ENCODE measurements at regions of chr1 and their contacts with region 1.

Region 1: DNA sequence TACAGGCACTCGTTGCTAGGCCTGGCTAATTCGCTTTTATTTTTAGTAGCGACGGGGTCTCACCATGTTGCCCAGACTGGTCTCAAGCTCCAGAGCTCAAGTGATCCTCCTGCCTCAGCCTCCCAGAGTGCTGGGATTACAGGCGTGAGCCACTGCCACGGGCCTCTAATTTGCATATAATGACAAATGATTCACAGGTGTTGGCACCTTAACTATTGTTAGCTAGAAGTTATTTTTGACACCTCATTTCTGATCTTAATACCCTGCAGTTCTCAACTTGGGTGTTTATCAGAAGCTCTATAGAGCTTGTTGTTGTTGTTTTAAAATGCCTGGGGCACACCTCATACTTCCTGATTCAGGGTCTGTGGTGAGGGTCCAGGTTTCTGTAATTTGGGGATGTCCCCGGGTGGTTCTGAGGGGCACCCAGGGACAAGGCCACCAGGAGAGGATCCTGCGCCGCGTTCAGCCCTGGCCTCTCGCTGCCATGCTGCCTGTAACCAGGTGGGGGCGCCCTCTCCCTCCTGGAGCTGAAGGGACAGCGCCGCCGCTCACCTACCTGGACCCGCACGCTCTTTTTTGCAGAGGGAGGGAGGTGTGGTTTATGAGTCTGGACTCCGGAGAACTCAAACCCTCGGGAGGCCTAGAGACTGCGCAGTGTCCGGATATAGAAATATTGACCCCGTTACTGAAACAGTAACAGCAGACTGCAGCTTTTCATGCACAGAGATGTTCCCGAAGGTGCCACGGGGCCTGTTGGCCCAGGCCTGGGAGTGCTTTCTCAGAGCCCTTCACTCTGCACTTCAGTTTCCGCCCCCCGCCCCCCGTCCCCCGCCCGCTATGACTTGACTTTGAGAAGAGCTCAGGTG is 23.0 kb upstream of the NEK2 start:
- DNase-seq: peak; percentile 89
- H3K4me3 Mint-ChIP-seq: no peak overlapping the region
- H3K27ac Mint-ChIP-seq: no peak overlapping the region
- H3K4me1 Mint-ChIP-seq: peaks cover 43% of the 10 kb centered on the region
- H3K27me3 Mint-ChIP-seq: peaks cover 44% of the 10 kb centered on the region

Region 2: GRCh38 chr1:211574705-211575104 is 123.7 kb before region 1 on chr1:
- CTCF ChIA-PET with region 1: no interaction called
- DNase-seq: no peak
- H3K4me3 Mint-ChIP-seq: no peak overlapping the region
- H3K27ac Mint-ChIP-seq: no peak overlapping the region
- H3K4me1 Mint-ChIP-seq: peaks cover 40% of the 10 kb centered on the region
- H3K27me3 Mint-ChIP-seq: no peaks in the 10 kb centered on the region

Region 3: DNA sequence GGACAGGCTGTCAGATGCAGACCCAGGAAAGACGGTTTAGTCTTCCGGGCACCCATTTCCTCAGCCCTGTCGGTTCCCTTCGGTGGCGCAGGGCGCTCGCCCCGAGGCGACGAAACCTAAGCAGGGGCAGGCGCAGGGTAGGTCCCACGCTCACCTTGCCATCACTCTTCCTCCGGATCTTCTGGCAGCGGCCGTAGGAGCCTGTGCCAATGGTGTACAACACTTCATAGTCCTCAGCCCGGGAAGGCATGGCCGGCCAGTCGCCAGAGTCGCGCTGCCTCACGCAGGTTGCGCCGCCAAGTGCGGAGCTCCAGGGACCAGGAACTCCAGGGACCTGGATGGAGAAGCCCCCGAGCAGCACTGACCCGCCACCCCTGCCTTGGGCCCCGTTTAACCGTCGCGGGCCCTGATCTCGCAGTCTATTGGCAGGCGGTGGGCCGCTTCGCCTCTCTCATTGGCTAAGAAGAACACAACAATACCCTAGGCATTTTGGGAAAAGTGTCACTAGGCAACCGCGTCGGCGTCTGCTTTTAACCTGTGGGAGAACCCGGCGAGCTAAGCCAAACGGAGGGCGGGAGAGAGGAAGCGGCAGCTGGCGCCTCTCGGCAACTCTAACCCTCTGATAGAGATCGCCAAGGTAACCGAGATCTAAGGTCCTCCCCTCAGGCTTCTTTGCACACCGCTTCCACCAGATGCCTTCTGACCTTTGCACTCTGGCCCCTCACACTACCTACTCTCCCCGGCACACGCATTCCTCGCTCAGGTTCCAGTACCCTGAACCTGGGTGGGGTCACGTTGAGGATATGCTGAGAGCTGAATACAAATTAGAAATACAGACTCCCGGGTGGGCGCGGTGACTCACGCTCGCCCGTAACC is 22.9 kb before region 1 on chr1 and contains the start of gene NEK2:
- CTCF ChIA-PET with region 1: interaction called, 36 read pairs
- DNase-seq: peak; percentile 97
- H3K4me3 Mint-ChIP-seq: peak within 1 kb of the TSS; percentile 82
- H3K27ac Mint-ChIP-seq: peak within 1 kb of the TSS; percentile 88
- H3K4me1 Mint-ChIP-seq: peaks cover 40% of the 10 kb centered on the region
- H3K27me3 Mint-ChIP-seq: no peaks in the 10 kb centered on the region

Region 4: GRCh38 chr1:211680752-211681327 is 17.6 kb before region 1 on chr1:
- CTCF ChIA-PET with region 1: interaction called, 36 read pairs
- DNase-seq: peak; percentile 77
- H3K4me3 Mint-ChIP-seq: no peak overlapping the region
- H3K27ac Mint-ChIP-seq: peak overlapping the region; percentile 73
- H3K4me1 Mint-ChIP-seq: peaks cover 21% of the 10 kb centered on the region
- H3K27me3 Mint-ChIP-seq: no peaks in the 10 kb centered on the region

Region 5: GRCh38 chr1:211830330-211831142 is 132.1 kb after region 1 on chr1 and contains the start of gene LPGAT1:
- CTCF ChIA-PET with region 1: interaction called, 19 read pairs
- DNase-seq: peak; percentile 78
- H3K4me3 Mint-ChIP-seq: peak within 1 kb of the TSS; percentile 96
- H3K27ac Mint-ChIP-seq: peak within 1 kb of the TSS; percentile 90
- H3K4me1 Mint-ChIP-seq: peaks cover 76% of the 10 kb centered on the region
- H3K27me3 Mint-ChIP-seq: no peaks in the 10 kb centered on the region

Region 6: DNA sequence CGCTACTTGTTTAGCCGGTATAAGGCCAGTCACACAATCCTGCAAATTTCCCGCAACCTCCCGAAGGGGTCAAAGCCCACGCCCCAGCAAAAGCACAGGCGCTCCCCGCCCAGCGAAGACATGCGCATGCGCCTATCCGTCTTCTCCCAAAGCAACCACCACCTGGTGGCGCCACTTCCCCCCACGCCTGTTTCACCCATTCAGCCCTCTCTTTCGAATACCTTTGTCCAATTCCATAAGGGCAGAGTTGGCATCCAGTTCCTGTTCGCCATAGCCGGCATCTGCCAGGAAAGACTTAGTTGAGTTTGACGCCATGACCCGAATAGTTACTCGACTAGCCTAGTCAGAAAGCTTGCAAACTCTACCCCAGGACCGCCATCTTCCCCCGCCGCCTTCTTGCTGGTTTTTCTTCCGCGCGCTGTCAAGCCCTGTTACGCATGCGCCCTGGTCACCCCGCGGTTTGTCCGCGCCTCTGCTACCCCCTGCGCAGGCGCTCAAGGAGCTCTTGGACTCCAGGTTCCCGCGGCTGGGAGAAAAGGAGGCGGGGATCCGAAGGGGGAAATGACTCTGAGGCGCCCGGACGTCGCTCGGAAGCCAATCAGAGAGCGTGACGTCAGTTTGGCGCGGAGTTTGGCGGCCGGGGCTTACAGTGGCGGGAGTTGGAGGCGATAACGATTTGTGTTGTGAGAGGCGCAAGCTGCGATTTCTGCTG is 336.9 kb after region 1 on chr1 and contains the starts of genes DTL and INTS7:
- CTCF ChIA-PET with region 1: interaction called, 28 read pairs
- DNase-seq: peak; percentile 99
- H3K4me3 Mint-ChIP-seq: peak within 1 kb of the TSS; percentile 93
- H3K27ac Mint-ChIP-seq: peak within 1 kb of the TSS; percentile 96
- H3K4me1 Mint-ChIP-seq: peaks cover 72% of the 10 kb centered on the region
- H3K27me3 Mint-ChIP-seq: no peaks in the 10 kb centered on the region

Region 7: DNA sequence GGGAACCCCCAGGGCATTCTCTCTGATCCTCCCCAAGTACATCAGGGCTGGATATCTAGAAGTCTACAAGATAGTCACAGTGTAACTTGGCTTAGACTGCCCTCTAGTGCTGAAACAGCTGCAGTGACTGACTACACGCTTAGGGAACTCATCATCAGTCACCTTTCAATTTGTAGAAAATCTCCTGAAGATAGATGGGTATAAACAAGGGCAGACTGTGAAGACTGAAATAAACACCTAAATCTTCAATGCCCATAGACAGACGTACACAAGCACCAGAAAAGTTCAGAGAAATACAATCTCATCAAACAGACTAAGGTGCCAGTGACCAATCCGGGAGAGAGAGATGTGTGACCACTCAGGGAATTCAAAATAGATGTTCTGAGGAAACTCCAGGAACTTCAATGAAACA is 669.7 kb after region 1 on chr1:
- CTCF ChIA-PET with region 1: interaction called, 13 read pairs
- DNase-seq: peak; percentile 71
- H3K4me3 Mint-ChIP-seq: no peak overlapping the region
- H3K27ac Mint-ChIP-seq: no peak overlapping the region
- H3K4me1 Mint-ChIP-seq: no peaks in the 10 kb centered on the region
- H3K27me3 Mint-ChIP-seq: no peaks in the 10 kb centered on the region